IMR-90 (cell line): ENCODE measurements at regions of chr7 and their contacts with region 1.

Region 1: DNA sequence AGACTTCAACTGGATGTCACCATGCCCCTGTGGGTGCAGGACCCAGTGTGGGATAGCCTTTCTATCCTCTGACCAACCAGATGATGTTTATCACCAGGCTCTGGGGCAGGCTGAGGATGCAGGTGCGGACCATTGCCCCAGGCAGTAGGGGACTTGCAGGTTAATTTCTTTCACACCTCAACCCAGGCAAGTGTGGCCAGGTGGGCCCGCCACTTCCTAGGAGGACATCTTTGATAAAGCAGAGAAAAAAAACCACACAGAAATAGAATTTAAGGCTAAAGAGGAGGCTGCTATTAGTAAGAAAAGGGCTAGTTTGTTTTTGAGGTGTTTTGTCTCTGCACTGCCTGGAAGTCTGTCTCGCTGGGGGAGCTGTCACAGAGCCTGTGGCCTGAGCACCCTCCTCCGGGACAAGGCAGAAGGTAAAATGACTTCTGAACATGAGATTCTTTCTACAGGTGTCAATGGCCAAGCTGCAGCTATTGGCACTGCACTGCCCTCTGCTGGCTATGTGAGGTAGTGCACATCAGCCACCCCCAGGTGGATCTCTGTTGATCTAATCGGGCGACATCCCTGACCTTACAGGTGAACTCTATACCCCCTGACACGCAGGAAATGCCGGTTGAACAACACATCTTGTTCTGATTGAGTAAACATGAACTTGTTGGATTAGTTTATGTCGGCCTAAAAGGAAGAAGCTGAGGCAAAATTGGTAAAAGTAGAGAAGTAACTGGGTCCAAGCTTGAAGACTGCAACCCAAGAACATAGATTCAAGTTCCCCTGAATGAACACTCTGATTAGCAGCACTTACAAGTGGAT is 21.0 kb downstream of the UPP1 start:
- DNase-seq: peak; percentile 26
- ATAC-seq: peak; percentile 78
- H3K4me3 ChIP-seq: no peak overlapping the region
- H3K27ac ChIP-seq: no peak overlapping the region
- H3K4me1 ChIP-seq: peaks cover 6% of the 10 kb centered on the region
- H3K27me3 ChIP-seq: no peaks in the 10 kb centered on the region
- CTCF ChIP-seq: peak; percentile 90
- POLR2A ChIP-seq: 0 out of 2 replicates have a peak, but pooled peaks have one; percentile 3
- RAD21 ChIP-seq: peak; percentile 94

Region 2: GRCh38 chr7:47254081-47255006 is 855.7 kb before region 1 on chr7:
- CTCF ChIA-PET with region 1: no interaction called
- POLR2A ChIA-PET with region 1: no interaction called
- dilution Hi-C with region 1: no loop called
- in situ Hi-C with region 1: loop called (anchors 25 kb)
- intact Hi-C with region 1: no loop called
- DNase-seq: peak; percentile 35
- ATAC-seq: peak; percentile 90
- H3K4me3 ChIP-seq: peak overlapping the region; percentile 76
- H3K27ac ChIP-seq: peak overlapping the region; percentile 66
- H3K4me1 ChIP-seq: peaks cover 6% of the 10 kb centered on the region
- H3K27me3 ChIP-seq: no peaks in the 10 kb centered on the region
- CTCF ChIP-seq: peak; percentile 85
- POLR2A ChIP-seq: no peak
- RAD21 ChIP-seq: peak; percentile 65

Region 3: DNA sequence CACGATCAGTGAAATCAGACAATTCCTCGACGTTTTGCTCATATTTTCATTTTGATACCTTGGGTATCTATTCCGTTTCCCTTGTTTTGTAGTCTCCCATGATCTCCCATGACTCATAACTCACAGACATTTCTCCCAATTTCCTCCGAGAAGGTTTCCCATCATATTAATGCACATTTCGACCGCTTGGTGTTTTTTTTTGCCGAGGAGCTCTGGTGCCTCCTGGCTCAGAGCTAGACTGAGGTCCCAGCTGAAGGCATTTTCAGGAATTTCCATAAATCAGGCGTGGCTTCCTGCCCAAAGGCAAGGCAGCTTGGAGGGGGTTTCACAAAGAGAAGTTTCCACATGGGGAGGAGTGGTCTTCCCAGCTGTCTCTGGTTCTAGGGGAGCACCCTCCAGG is 379.9 kb before region 1 on chr7:
- CTCF ChIA-PET with region 1: no interaction called
- POLR2A ChIA-PET with region 1: no interaction called
- dilution Hi-C with region 1: no loop called
- in situ Hi-C with region 1: no loop called
- intact Hi-C with region 1: no loop called
- DNase-seq: no peak
- ATAC-seq: no peak
- H3K4me3 ChIP-seq: no peak overlapping the region
- H3K27ac ChIP-seq: no peak overlapping the region
- H3K4me1 ChIP-seq: peaks cover 6% of the 10 kb centered on the region
- H3K27me3 ChIP-seq: no peaks in the 10 kb centered on the region
- CTCF ChIP-seq: no peak
- POLR2A ChIP-seq: no peak
- RAD21 ChIP-seq: no peak

Region 4: DNA sequence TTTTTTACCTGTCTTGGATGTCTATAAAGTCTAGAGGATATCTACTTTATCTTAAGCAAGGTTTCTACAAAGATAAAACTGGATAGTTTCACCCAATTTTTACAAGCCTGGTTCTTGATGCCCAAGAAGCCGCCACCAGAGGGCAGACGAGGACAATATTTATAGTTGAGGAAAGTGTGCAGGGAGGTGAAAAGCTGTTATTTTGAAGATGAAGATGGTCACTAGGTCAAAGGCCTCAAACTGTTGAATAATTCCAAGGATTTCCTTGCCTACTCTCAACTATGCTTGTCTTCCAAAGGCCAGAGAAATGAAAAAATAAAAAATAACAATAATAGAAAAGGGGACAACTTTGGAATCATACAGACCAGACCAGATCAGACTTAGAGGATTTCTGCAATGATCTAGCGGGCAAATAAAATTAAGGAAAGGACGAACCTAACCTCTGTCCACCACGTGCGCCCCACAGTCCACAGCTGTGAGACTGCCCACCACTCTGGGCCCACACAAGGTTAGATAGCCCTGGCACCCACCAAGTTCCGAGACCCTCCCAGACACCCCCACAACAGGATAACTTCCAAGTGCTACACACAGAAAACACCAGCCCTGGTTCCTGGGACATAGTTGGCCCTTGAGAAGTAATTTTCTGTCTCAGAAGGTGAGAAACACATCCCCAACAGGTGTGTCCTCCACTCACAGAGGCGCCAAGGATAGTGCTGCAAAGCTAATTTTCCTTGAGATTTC is 164.6 kb before region 1 on chr7:
- CTCF ChIA-PET with region 1: interaction called, 10 read pairs
- POLR2A ChIA-PET with region 1: no interaction called
- dilution Hi-C with region 1: no loop called
- in situ Hi-C with region 1: no loop called
- intact Hi-C with region 1: loop called (anchors 1 kb)
- DNase-seq: peak; percentile 62
- ATAC-seq: peak; percentile 22; the same call in 1 of the 2 replicates
- H3K4me3 ChIP-seq: no peak overlapping the region
- H3K27ac ChIP-seq: no peak overlapping the region
- H3K4me1 ChIP-seq: peaks cover 14% of the 10 kb centered on the region
- H3K27me3 ChIP-seq: no peaks in the 10 kb centered on the region
- CTCF ChIP-seq: peak; percentile 82
- POLR2A ChIP-seq: no peak
- RAD21 ChIP-seq: peak; percentile 72

Region 5: DNA sequence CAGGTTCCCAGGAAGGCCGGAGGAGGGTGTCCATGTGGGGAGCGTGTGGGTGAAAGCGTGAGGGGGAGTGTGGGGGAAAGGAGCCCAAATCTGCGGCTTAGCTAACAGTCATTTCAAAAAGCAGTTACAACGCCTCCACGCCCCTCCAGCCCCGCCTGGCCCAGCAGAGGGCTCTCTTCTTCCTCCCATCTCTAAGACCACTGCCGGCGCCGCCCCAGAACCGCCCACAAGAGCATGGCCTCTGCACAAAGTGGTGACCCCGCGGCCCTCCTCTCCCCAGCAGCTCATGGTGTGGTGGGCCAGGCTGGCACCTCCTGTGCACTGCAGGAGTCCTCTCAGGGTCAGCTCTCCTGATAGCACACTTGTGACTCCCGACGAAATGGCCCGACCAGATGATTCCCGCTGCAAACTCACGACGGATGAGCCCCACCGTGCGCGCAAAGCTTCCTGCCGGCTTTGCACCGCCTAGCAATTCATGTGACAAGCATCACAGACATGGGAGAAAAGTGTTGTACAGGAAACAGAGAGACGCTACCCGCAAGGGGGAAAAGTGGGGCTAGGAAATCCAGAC is 118.2 kb before region 1 on chr7:
- CTCF ChIA-PET with region 1: interaction called, 20 read pairs
- POLR2A ChIA-PET with region 1: no interaction called
- dilution Hi-C with region 1: loop called (anchors 25 kb)
- in situ Hi-C with region 1: no loop called
- intact Hi-C with region 1: loop called (anchors 1 kb)
- DNase-seq: peak; percentile 51
- ATAC-seq: peak; percentile 100
- H3K4me3 ChIP-seq: peak overlapping the region; percentile 44
- H3K27ac ChIP-seq: no peak overlapping the region; the same call in 1 of the 2 replicates
- H3K4me1 ChIP-seq: no peaks in the 10 kb centered on the region; the same call in 1 of the 2 replicates
- H3K27me3 ChIP-seq: no peaks in the 10 kb centered on the region; the same call in 1 of the 2 replicates
- CTCF ChIP-seq: peak; percentile 70
- POLR2A ChIP-seq: no peak
- RAD21 ChIP-seq: peak; percentile 73

Region 6: DNA sequence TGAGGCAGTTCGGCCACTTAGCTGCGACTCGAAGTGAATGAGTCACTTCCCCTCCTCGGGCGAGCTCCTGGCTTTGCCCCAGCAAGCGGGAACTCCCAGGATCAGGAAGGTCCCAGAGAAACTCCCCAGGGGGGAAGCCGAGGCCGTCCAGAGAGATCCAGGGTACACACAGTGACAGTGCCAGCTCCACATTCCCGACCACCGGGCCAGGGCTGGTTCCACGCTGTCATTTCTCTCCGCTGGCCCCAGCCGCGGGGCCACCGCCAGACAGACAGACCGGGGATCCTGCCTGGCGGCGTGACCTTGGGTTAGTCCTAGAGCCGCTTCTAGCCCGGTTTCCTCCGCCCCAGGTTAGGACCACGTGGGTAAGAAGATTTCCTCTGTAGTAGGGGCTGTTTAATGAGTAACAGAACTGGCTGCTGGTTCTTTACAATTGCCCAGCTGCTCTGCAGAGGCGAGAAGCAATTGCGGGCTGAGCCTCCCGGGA is 21.5 kb before region 1 on chr7:
- CTCF ChIA-PET with region 1: interaction called, 5 read pairs
- POLR2A ChIA-PET with region 1: no interaction called
- dilution Hi-C with region 1: no loop called
- in situ Hi-C with region 1: no loop called
- intact Hi-C with region 1: loop called (anchors 1 kb)
- DNase-seq: peak; percentile 90
- ATAC-seq: peak; percentile 31
- H3K4me3 ChIP-seq: peak overlapping the region; percentile 91
- H3K27ac ChIP-seq: peak overlapping the region; percentile 94
- H3K4me1 ChIP-seq: peaks cover 22% of the 10 kb centered on the region
- H3K27me3 ChIP-seq: no peaks in the 10 kb centered on the region
- CTCF ChIP-seq: no peak
- POLR2A ChIP-seq: peak; percentile 68
- RAD21 ChIP-seq: no peak

Region 7: GRCh38 chr7:48505051-48505450 is 395.0 kb after region 1 on chr7:
- CTCF ChIA-PET with region 1: no interaction called
- POLR2A ChIA-PET with region 1: no interaction called
- dilution Hi-C with region 1: no loop called
- in situ Hi-C with region 1: no loop called
- intact Hi-C with region 1: no loop called
- DNase-seq: no peak
- ATAC-seq: no peak
- H3K4me3 ChIP-seq: no peak overlapping the region
- H3K27ac ChIP-seq: no peak overlapping the region
- H3K4me1 ChIP-seq: no peaks in the 10 kb centered on the region
- H3K27me3 ChIP-seq: no peaks in the 10 kb centered on the region; the same call in 1 of the 2 replicates
- CTCF ChIP-seq: no peak
- POLR2A ChIP-seq: no peak
- RAD21 ChIP-seq: no peak